Calu3 (cell line): ENCODE measurements at regions of chr17 and their contacts with region 1.

Region 1: GRCh38 chr17:82236142-82236981 is 7.5 kb downstream of the SLC16A3 start:
- DNase-seq: peak; percentile 64
- H3K4me3 Mint-ChIP-seq: no peak overlapping the region
- H3K27ac Mint-ChIP-seq: no peak overlapping the region
- H3K4me1 Mint-ChIP-seq: peaks cover 13% of the 10 kb centered on the region
- H3K27me3 Mint-ChIP-seq: no peaks in the 10 kb centered on the region
- CTCF ChIP-seq: peak; percentile 86

Region 2: DNA sequence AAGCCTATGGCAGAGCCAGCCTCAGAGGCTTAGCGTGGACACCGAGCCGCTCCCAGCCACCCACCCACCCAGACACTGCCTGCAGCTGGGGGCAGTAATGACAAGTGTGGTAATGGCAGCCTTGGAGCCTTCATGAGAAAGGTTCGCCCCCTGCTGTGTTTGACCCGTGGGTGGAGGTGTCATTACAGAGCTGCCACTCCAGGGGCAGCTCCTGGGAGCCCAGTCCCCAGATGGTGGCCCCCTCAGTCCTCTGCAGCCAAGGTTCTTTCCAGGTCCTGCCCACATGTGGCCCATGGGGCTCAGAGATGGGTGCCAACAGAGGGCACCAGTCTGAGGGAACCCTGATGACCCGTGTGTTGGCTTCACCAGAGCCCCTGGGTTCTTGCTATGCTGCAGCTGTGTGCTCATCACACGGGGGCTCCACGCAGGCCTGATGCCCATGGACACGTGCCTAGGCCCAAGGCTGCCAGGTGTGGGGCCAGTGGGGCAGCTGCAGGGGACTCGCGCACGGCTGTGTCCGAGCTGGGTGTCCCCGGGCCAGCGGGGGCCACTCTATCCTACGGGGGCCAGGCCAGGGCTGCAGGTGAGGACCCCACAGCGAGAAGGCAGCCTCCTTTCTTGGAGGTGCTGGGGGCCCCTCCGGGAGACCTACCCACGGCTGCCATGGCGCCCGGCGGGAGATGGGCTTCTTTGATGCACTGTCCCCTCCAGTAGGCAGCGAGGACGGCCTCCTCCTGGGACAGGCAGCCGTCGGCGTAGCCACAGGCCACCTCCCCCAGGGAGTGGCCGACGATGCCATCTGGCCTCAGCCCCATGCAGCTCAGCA is 146.4 kb before region 1 on chr17:
- CTCF ChIA-PET with region 1: no interaction called
- intact Hi-C with region 1: no loop called
- DNase-seq: no peak
- H3K4me3 Mint-ChIP-seq: no peak overlapping the region
- H3K27ac Mint-ChIP-seq: no peak overlapping the region
- H3K4me1 Mint-ChIP-seq: no peaks in the 10 kb centered on the region
- H3K27me3 Mint-ChIP-seq: no peaks in the 10 kb centered on the region
- CTCF ChIP-seq: no peak

Region 3: DNA sequence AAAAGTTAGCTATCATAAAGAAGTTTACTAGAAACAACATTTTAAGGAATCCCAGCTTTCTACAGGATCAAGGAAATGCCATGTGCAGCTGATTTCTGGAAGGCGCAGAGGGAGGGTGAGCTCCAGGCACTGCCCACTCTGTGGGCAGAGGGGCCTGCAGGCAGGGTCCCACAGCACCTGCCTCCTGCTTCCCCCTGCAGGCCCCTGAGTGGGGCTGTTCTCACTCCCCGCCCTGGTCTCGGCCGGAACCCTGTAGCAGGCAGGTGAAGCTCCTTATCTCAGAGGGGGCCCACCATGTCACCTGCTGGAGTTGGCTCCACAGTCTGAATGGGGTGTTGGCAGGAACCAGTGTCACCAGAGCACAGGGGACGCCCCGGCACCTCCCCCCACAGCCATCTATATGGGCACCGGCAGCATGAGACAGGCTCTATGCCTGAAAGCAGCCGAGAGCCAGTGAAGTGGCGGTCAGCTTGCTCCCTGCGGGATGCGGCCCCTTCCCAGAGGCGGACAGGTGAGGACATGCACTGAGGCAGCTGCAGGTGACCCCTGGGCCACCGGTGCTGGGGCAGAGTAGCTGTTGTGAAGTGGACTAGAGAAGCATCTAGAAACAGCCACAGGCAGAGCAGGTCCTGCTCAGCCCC is 90.7 kb before region 1 on chr17:
- CTCF ChIA-PET with region 1: no interaction called
- intact Hi-C with region 1: no loop called
- DNase-seq: no peak
- H3K4me3 Mint-ChIP-seq: no peak overlapping the region
- H3K27ac Mint-ChIP-seq: no peak overlapping the region
- H3K4me1 Mint-ChIP-seq: peaks cover 6% of the 10 kb centered on the region
- H3K27me3 Mint-ChIP-seq: no peaks in the 10 kb centered on the region
- CTCF ChIP-seq: no peak

Region 4: DNA sequence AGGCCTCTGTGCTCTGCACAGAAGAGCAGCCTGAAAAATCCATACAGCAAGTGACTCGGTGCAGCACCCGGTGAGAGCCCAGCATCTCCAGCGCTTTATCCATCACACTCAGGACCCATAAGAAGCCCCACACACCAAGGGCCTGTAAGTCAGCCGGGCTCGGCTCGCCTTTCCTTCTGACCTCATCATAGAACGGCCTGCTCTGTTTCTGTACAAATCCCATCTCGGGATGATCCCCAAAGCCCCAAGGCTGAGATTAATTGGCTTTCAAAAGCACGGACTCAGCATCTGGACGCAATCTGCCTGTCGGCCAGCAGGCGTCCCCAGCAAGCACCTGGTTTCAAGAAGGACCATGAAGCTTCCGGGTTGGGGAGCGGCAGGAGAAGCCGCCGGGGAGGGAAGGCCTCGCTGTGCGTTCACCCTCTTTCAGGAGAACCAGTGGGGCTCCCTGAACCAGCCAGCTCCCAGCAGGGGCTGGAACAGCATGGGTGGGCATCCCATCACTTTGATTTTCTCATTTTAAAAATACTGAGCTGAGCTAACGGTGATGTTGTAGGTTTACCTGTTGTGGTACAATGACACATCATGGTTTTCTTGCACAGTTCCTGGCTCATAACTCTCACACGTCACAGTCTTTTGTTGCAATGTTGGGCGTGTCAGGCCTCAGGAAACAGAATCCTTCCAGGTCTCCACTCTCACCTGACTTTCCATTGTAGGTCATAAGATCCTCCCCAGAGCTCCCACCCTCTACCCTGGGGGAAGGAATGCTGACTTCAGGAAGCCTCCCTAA is 30.4 kb before region 1 on chr17:
- CTCF ChIA-PET with region 1: interaction called, 10 read pairs
- intact Hi-C with region 1: no loop called
- DNase-seq: peak; percentile 85
- H3K4me3 Mint-ChIP-seq: peak overlapping the region; percentile 45
- H3K27ac Mint-ChIP-seq: peak overlapping the region; percentile 89
- H3K4me1 Mint-ChIP-seq: peaks cover 31% of the 10 kb centered on the region
- H3K27me3 Mint-ChIP-seq: no peaks in the 10 kb centered on the region
- CTCF ChIP-seq: peak; percentile 88

Region 5: DNA sequence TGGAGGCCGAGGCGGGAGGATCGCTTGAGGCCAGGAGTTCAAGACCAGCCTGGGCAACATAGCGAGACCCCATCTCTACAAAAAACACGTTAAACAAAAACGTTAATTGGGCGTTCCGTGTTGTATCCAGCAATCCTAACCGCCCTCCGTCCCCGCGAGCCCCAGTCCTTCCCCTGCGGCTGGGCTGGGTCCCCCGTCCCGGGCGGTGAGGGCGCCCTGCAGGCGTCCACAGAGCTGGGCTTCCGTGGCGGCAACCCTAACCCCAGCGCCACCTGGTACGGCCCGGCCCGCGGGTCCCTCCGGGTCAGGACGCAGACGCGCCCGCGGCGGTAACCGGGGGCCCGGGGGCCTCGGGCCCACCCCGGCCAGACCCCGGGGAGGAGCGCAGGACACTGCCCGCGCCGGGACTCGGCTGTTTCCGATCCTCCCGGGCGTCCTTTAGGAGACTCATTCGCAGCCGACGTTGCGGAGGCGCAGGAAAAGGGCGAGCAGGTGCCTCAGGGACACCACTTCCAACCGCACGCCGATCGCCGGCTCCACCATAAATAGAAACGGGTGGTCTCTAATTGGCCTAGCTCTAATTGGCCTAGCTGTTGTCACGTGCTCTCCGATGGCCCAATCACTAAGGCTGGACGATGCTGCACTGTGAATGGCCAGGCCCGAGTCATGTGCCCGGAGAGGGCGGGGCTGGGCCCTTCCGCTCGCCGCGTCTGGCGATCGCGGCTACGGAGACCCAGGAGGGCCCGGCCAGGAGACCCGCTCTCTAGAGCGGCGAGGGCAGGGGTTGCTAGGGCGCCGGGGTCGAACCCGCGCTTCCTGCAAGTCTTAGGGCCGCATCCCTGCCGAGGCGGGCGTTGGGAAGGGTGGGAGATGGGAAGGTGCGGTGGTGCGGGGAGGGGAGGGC is 56.1 kb after region 1 on chr17:
- CTCF ChIA-PET with region 1: no interaction called
- intact Hi-C with region 1: loop called (anchors 10 kb)
- DNase-seq: peak; percentile 95
- H3K4me3 Mint-ChIP-seq: peak overlapping the region; percentile 70
- H3K27ac Mint-ChIP-seq: peak overlapping the region; percentile 75
- H3K4me1 Mint-ChIP-seq: peaks cover 40% of the 10 kb centered on the region
- H3K27me3 Mint-ChIP-seq: no peaks in the 10 kb centered on the region
- CTCF ChIP-seq: no peak

Region 6: DNA sequence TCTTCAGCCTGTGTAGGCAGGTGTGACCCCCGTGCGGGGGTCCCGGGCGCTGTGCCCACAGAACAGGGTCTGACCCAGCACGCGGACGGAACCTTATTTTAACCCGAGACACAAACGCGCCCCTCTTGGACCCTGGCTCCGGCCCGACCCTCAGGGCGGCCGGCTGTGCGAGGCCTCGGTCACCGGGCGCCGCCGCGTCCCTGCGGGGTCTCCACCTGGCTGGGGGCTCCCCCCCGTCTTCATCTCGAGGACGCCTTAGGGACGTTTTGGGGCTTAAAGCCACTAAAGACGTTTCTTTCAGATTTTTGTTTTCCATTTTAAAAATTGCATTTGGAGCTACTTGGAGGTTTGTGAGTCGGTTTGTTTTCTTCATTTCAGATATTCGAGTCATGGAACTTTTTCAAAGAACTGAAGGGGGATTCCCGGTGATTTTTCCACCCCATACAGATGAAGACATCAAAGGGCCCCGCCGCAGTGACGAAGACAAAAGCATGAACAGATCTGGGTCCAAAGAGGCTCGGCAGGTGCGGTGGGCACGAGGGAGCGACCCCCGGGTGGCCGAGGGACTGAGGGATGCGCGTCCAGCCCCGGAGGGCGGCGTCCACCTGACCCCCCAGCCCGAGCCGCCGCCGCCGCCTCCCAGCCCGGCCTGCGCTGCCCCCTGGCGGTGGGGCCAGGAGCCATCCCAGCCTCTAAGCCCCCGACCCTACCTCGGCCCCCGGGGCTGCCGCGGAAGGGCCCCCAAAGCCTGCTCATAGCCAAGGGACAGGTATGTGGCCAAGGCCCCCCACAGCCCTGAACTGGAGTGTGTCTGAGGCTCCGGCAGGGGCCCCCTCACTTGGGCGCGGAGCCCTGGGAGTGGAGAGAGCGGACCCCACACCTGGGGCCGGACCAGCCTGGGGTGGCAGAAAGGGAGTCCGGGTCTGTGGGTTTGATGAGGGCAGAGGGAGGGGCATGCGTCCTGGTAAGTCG is 84.9 kb after region 1 on chr17:
- CTCF ChIA-PET with region 1: interaction called, 6 read pairs
- intact Hi-C with region 1: loop called (anchors 10 kb)
- DNase-seq: peak; percentile 72
- H3K4me3 Mint-ChIP-seq: no peak overlapping the region
- H3K27ac Mint-ChIP-seq: peak overlapping the region; percentile 50
- H3K4me1 Mint-ChIP-seq: peaks cover 9% of the 10 kb centered on the region
- H3K27me3 Mint-ChIP-seq: peaks cover 27% of the 10 kb centered on the region
- CTCF ChIP-seq: peak; percentile 95